Endothelial cell of umbilical vein (primary cell): ENCODE measurements at regions of chr12 and their contacts with region 1.

Region 1: DNA sequence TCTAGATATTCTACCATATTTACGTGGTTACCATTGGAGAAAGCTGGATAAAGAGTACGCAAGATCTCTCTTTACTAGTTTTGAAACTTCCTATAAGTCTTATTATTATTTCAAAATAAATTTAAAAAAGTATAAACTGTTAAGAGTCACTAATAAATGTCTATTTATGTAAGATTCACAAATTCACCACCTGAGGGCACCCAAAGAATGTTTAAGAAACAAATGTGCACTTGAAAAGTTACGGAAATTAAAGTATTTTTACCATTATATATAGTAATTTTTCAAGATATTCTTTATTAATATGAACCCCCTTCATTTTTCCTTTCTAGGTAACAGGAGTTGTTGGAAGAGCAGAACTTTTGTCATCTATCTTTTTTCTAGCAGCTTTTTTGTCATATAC is 11.9 kb downstream of the TMTC3 start:
- DNase-seq: peak; percentile 62
- H3K4me3 ChIP-seq: no peak overlapping the region
- H3K27ac ChIP-seq: no peak overlapping the region
- H3K4me1 ChIP-seq: no peaks in the 10 kb centered on the region
- H3K27me3 ChIP-seq: no peaks in the 10 kb centered on the region
- CTCF ChIP-seq: peak in 1 of 2 donors; percentile 2
- POLR2A ChIP-seq: no peak

Region 2: DNA sequence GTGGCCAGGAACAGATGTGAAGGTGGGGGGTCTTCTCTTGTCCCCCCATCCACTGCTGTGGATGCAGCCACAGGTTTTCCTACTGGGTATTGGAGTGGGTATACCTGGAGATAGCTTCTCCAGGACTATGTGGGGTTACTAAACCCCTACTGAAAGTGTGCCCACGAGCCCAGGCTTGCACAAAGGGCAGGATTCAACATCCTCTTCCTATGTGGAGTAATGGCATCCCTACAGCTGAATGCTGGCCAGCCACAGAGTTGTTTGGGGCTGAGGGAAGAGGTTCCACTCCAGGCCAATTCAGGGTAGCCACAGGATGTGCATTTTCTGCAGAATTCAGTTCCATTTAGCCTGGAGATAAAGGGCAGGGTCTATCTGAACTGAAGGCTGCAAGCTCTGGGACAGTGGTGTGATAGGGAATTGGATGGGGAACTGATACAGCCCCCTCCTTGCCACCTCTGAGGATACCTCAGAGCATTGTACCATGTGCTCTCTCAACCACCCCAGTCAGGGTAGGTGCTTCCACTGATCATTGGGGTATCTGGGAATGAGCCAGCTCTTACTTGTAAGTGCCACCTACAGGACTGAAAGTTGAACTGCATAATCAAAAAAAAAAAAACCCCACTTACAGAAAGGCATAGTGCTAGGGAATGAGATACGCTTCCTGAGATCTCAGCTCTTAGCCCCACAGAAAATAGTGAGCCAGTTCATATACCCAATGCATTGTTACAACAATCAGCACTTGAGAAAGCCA is 239.2 kb after region 1 on chr12:
- CTCF ChIA-PET with region 1: interaction called, 5 read pairs
- POLR2A ChIA-PET with region 1: no interaction called
- dilution Hi-C with region 1: no loop called
- intact Hi-C with region 1: loop called (anchors 1 kb)
- DNase-seq: peak; percentile 53
- H3K4me3 ChIP-seq: no peak overlapping the region
- H3K27ac ChIP-seq: no peak overlapping the region
- H3K4me1 ChIP-seq: no peaks in the 10 kb centered on the region
- H3K27me3 ChIP-seq: no peaks in the 10 kb centered on the region
- CTCF ChIP-seq: peak; percentile 36 to 50
- POLR2A ChIP-seq: no peak

Region 3: DNA sequence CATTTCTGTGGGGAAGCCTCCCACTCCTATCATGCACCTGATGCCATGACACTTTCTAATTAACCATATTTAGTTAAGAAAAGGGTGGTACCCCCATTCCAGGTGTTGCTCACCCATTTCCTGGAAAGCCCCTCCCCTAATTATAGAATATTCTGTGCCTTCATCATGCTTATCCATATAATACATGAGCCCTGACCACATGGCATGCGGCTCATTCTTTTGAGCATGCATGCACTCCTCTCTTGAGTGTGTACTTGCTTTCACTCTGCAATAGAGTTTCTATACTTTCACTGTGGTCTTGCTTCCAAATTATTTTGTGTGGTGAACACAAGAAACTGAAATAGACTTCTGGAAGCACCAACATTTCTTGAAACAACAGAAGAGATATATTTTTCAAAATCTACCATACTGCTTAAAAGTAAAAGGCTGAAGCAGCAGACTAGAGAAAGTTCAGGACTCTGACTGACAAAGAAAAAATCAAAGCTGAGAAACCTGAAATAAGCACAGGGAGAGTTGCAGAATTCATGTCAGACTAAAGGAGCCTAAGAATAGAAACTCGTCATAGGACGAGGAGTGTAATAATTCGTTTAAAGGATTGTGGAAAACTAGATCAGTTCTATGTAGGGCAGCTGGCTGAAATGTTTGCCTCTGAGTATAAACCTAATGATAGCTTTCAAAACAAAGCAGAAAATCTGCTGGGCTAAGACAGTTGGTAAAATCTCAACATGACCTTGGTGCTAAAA is 281.5 kb after region 1 on chr12:
- CTCF ChIA-PET with region 1: no interaction called
- POLR2A ChIA-PET with region 1: no interaction called
- dilution Hi-C with region 1: no loop called
- intact Hi-C with region 1: no loop called
- DNase-seq: no peak
- H3K4me3 ChIP-seq: no peak overlapping the region
- H3K27ac ChIP-seq: no peak overlapping the region
- H3K4me1 ChIP-seq: peaks cover 4% of the 10 kb centered on the region
- H3K27me3 ChIP-seq: no peaks in the 10 kb centered on the region
- CTCF ChIP-seq: no peak
- POLR2A ChIP-seq: no peak

Region 4: GRCh38 chr12:88633312-88633711 is 479.4 kb after region 1 on chr12:
- CTCF ChIA-PET with region 1: no interaction called
- POLR2A ChIA-PET with region 1: no interaction called
- dilution Hi-C with region 1: no loop called
- intact Hi-C with region 1: loop called (anchors 2 kb)
- DNase-seq: peak; percentile 8
- H3K4me3 ChIP-seq: no peak overlapping the region
- H3K27ac ChIP-seq: no peak overlapping the region
- H3K4me1 ChIP-seq: peaks cover 3% of the 10 kb centered on the region
- H3K27me3 ChIP-seq: no peaks in the 10 kb centered on the region
- CTCF ChIP-seq: no peak
- POLR2A ChIP-seq: no peak

Region 5: DNA sequence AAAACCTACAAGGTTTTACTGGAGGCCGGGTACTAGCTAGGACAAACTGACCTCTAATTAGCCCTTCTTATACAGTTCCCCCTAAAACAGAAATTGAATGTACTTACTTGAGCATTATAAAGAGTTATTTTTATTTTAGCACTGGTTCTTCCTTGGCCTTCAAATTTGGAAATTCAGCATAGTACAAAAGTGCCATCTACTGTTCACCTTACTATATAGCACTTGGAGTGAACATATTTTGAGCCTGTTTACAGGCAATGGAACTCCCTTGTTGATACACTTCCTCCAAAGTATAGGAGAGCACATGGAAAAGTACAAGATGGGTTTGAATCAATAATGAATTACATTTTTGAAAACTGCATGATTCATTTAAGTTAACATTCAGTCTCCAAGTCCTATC is 1375.8 kb after region 1 on chr12:
- CTCF ChIA-PET with region 1: no interaction called
- POLR2A ChIA-PET with region 1: no interaction called
- dilution Hi-C with region 1: no loop called
- intact Hi-C with region 1: loop called (anchors 1 kb)
- DNase-seq: peak; percentile 73
- H3K4me3 ChIP-seq: no peak overlapping the region
- H3K27ac ChIP-seq: no peak overlapping the region
- H3K4me1 ChIP-seq: peaks cover 4% of the 10 kb centered on the region
- H3K27me3 ChIP-seq: no peaks in the 10 kb centered on the region
- CTCF ChIP-seq: peak; percentile 49 to 51
- POLR2A ChIP-seq: no peak